Heart left ventricle (tissue), 16 donors: ENCODE measurements at regions of chr1 and their contacts with region 1.

Region 1: DNA sequence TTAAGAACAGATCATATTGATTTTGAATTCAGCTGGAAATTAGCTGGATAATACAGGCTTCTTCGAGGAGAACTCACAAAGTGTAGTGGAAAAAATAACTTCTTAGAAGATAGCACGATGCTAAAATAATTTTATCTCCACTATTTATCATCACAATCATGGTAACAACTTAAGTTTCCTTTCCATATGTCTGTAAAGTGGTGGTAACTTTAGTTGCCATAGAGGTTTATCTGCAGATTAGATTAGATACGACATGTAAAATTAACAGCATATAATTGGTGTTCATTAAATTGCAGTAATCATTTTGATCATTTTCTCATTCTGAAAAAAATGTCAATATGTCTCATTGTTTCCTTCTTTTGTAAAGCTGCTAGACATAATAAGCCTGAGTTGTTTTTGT is 921.5 kb downstream of the KCNT2 start:
- DNase-seq: no peak
- ATAC-seq: no peak
- H3K4me3 ChIP-seq: no peak overlapping the region
- H3K27ac ChIP-seq: no peak overlapping the region
- H3K4me1 ChIP-seq: no peaks in the 10 kb centered on the region
- H3K27me3 ChIP-seq: no peaks in the 10 kb centered on the region
- CTCF ChIP-seq: no peak
- POLR2A ChIP-seq: no peak

Region 2: GRCh38 chr1:195130598-195130997 is 556.2 kb before region 1 on chr1:
- intact Hi-C with region 1: no loop called
- DNase-seq: no peak
- ATAC-seq: no peak
- H3K4me3 ChIP-seq: no peak overlapping the region
- H3K27ac ChIP-seq: no peak overlapping the region
- H3K4me1 ChIP-seq: no peaks in the 10 kb centered on the region
- H3K27me3 ChIP-seq: no peaks in the 10 kb centered on the region
- CTCF ChIP-seq: no peak
- POLR2A ChIP-seq: no peak

Region 3: DNA sequence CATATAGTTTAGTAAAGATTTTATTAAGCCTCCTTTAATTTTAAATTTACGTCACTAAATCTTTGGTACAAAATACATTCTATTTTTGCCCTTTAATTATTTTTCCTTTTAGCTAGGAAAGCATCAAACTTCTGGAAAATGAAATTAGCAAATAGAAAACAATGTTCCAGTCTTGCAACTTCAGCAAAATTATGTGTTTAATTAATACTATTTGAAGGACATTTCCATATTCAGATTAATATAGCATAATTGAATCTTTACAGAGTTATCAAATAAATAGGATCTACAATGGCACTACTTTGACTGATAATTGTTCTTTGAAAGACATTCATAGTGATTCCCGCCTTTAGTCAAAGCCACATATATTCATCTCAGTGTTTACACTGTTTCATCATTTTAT is 17.3 kb after region 1 on chr1:
- intact Hi-C with region 1: loop called in 1 of 10 experiments (anchors 2 kb)
- DNase-seq: no peak
- ATAC-seq: no peak
- H3K4me3 ChIP-seq: no peak overlapping the region
- H3K27ac ChIP-seq: no peak overlapping the region
- H3K4me1 ChIP-seq: no peaks in the 10 kb centered on the region
- H3K27me3 ChIP-seq: no peaks in the 10 kb centered on the region
- CTCF ChIP-seq: no peak
- POLR2A ChIP-seq: no peak

Region 4: DNA sequence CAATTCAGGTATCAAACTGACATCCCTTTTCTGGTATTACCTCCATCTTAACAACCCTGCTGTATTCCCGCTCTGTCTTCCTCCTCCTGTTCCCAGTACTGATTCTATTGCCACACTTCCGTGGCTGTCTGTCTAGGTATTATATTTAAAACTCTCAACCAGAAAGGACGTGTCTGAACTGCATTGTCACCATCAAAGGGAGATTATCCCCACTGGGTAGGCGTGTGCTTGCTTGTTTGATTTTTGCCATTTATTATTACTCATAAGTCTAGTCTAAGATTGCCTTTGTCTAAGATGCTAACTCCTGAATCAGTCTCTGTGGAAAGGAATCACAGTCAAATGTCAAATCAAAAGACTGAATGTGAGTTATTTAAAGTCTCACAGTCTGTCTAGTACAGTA is 271.4 kb after region 1 on chr1:
- intact Hi-C with region 1: no loop called
- DNase-seq: no peak
- ATAC-seq: no peak
- H3K4me3 ChIP-seq: no peak overlapping the region
- H3K27ac ChIP-seq: no peak overlapping the region
- H3K4me1 ChIP-seq: peaks cover 0 to 2% (median 0%) of the 10 kb centered on the region in 12 donors
- H3K27me3 ChIP-seq: no peaks in the 10 kb centered on the region
- CTCF ChIP-seq: no peak
- POLR2A ChIP-seq: no peak